OCI-LY7 (cell line): ENCODE measurements at regions of chr9 and their contacts with region 1.

Region 1: GRCh38 chr9:109918339-109919163 is 138.6 kb downstream of the PALM2AKAP2 start:
- DNase-seq: peak; percentile 96
- H3K4me3 ChIP-seq: peak overlapping the region; percentile 49
- H3K27ac ChIP-seq: peak overlapping the region; percentile 98
- H3K4me1 ChIP-seq: peaks cover 97% of the 10 kb centered on the region
- CTCF ChIP-seq: no peak

Region 2: DNA sequence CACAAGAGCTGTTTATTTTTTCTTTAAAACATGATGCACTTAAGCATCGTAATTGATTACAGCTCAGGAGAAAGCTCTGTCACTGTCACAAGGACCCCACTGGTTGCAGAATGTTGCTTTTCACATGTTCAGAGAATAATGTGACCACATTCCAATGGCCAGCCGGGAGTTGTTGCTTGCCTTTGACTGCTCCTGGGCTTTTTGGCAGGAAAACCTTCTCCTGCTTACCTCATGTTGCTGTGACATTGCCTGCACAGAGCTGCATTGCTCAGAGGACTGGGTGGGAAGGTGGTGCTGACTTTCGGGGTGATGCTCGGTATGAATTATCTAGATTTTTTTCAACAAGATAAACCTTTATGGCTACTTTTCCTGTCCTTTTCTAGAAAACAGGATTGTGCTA is 50.3 kb before region 1 on chr9:
- CTCF ChIA-PET with region 1: no interaction called
- POLR2A ChIA-PET with region 1: no interaction called
- intact Hi-C with region 1: no loop called
- DNase-seq: no peak
- H3K4me3 ChIP-seq: no peak overlapping the region
- H3K27ac ChIP-seq: no peak overlapping the region
- H3K4me1 ChIP-seq: no peaks in the 10 kb centered on the region
- CTCF ChIP-seq: no peak

Region 3: DNA sequence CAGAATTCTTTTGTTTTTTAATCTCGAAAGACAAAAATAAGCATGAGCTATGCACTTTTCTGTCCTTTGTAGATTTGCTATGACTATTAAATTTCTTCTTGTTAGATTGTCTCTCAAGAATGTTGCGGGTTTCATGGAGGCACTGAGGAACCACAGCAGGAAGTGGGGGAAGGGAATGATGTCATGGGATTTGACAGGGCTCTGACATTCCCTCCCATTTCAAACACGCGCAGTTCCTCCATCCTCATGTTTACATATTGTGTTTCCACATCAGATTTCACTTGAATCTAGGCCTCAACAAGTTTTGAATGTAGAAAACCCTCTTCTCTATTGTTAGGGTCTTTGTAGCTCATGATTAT is 16.3 kb after region 1 on chr9:
- CTCF ChIA-PET with region 1: no interaction called
- POLR2A ChIA-PET with region 1: interaction called, 10 read pairs
- intact Hi-C with region 1: no loop called
- DNase-seq: no peak
- H3K4me3 ChIP-seq: no peak overlapping the region
- H3K27ac ChIP-seq: no peak overlapping the region
- H3K4me1 ChIP-seq: peaks cover 30% of the 10 kb centered on the region
- CTCF ChIP-seq: no peak

Region 4: GRCh38 chr9:109953813-109954497 is 35.4 kb after region 1 on chr9:
- CTCF ChIA-PET with region 1: no interaction called
- POLR2A ChIA-PET with region 1: interaction called, 224 read pairs
- intact Hi-C with region 1: loop called (anchors 1 kb)
- DNase-seq: peak; percentile 83
- H3K4me3 ChIP-seq: peak overlapping the region; percentile 39
- H3K27ac ChIP-seq: peak overlapping the region; percentile 86
- H3K4me1 ChIP-seq: peaks cover 98% of the 10 kb centered on the region
- CTCF ChIP-seq: peak; percentile 90

Region 5: GRCh38 chr9:109972026-109972882 is 53.7 kb after region 1 on chr9:
- CTCF ChIA-PET with region 1: interaction called, 14 read pairs
- POLR2A ChIA-PET with region 1: interaction called, 358 read pairs
- intact Hi-C with region 1: loop called (anchors 1 kb)
- DNase-seq: peak; percentile 94
- H3K4me3 ChIP-seq: peak overlapping the region; percentile 37
- H3K27ac ChIP-seq: peak overlapping the region; percentile 98
- H3K4me1 ChIP-seq: peaks cover 100% of the 10 kb centered on the region
- CTCF ChIP-seq: peak; percentile 87

Region 6: GRCh38 chr9:110048403-110048975 is 129.9 kb after region 1 on chr9:
- CTCF ChIA-PET with region 1: no interaction called
- POLR2A ChIA-PET with region 1: interaction called, 33 read pairs
- intact Hi-C with region 1: loop called (anchors 2 kb)
- DNase-seq: peak; percentile 88
- H3K4me3 ChIP-seq: peak overlapping the region; percentile 86
- H3K27ac ChIP-seq: peak overlapping the region; percentile 53
- H3K4me1 ChIP-seq: peaks cover 47% of the 10 kb centered on the region
- CTCF ChIP-seq: no peak